B cell (primary cell): ENCODE measurements at regions of chr6 and their contacts with region 1.

Region 1: DNA sequence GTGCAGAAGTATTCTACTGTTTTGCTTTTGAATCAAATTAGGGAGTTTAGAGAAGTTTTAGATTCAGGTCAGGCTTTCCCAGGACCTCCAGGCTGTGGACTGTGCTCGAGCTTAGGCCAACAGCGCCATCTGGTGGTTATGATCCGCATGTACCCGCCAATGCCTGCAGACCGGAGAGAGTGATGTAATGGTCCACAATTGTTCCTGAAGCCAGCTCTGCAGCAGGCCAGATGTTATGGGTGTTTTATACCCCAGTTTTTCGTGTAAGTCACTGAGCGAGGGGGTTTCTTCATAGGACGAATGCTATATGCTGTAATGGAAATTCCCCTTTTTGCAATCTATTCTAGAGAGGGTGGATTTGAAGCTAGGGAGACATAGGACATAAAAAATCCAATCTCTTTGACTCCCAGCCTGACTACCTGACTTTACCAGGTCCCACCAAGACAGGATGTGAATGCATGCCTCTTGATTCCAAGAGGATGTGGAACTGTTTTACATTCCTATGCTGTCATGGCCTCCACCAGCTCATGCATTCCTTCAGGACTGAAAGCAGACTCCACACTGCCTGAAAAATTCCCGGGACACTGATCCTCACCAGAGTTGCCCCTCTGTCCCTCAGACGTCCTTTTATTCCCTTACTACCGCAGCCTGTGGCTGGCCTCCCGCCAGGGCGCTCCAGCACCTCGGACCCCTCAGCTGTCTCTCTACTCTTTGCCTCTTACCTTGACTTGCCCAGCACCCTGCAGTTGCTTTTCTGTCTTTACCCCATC is 41.2 kb upstream of the LY86 start:
- DNase-seq: peak; percentile 89
- ATAC-seq: peak; percentile 86
- H3K4me3 ChIP-seq: peak overlapping the region; percentile 36 to 66 (median 50)
- H3K4me3 Mint-ChIP-seq: peak overlapping the region; percentile 90
- H3K27ac ChIP-seq: no peak overlapping the region
- H3K27ac Mint-ChIP-seq: no peak overlapping the region
- H3K4me1 ChIP-seq: peaks cover 14 to 15% of the 10 kb centered on the region in 2 donors
- H3K4me1 Mint-ChIP-seq: peaks cover 13% of the 10 kb centered on the region
- H3K27me3 ChIP-seq: peaks cover 0 to 34% (median 9%) of the 10 kb centered on the region in 4 experiments
- H3K27me3 Mint-ChIP-seq: peaks cover 33% of the 10 kb centered on the region
- CTCF ChIP-seq: peak; percentile 98

Region 2: GRCh38 chr6:5422321-5422915 is 1124.9 kb before region 1 on chr6:
- CTCF ChIA-PET with region 1: interaction called, 14 read pairs
- POLR2A ChIA-PET with region 1: no interaction called
- intact Hi-C with region 1: no loop called
- DNase-seq: peak; percentile 10
- ATAC-seq: no peak
- H3K4me3 ChIP-seq: no peak overlapping the region
- H3K4me3 Mint-ChIP-seq: no peak overlapping the region
- H3K27ac ChIP-seq: no peak overlapping the region
- H3K27ac Mint-ChIP-seq: no peak overlapping the region
- H3K4me1 ChIP-seq: no peaks in the 10 kb centered on the region
- H3K4me1 Mint-ChIP-seq: peaks cover 7% of the 10 kb centered on the region
- H3K27me3 ChIP-seq: no peaks in the 10 kb centered on the region
- H3K27me3 Mint-ChIP-seq: no peaks in the 10 kb centered on the region
- CTCF ChIP-seq: peak; percentile 14

Region 3: GRCh38 chr6:6105472-6106036 is 441.7 kb before region 1 on chr6:
- CTCF ChIA-PET with region 1: interaction called, 36 read pairs
- POLR2A ChIA-PET with region 1: no interaction called
- intact Hi-C with region 1: loop called (anchors 1 kb)
- DNase-seq: peak; percentile 25
- ATAC-seq: no peak
- H3K4me3 ChIP-seq: no peak overlapping the region
- H3K4me3 Mint-ChIP-seq: no peak overlapping the region
- H3K27ac ChIP-seq: no peak overlapping the region
- H3K27ac Mint-ChIP-seq: no peak overlapping the region
- H3K4me1 ChIP-seq: no peaks in the 10 kb centered on the region
- H3K4me1 Mint-ChIP-seq: no peaks in the 10 kb centered on the region
- H3K27me3 ChIP-seq: peaks cover 0 to 7% (median 0%) of the 10 kb centered on the region in 4 experiments
- H3K27me3 Mint-ChIP-seq: peaks cover 44% of the 10 kb centered on the region
- CTCF ChIP-seq: no peak

Region 4: DNA sequence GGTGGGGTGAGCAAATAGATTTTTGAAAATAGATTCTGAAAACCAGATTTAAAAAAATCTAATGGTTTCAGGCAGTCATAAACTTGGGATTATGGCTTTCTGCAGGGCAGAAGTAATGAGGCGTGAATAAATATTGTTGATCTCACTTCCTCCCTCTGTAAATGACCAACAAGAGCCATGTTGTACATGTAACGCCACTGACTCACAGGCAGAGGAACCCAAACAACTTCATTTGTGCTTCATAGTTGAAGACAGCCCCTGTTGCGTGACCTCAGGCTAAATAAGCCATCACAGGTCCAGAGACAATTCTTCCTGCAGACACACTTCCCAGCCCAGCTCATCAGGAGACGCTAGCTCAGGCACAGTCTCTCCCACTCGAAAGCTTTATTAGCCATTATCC is 167.7 kb before region 1 on chr6:
- CTCF ChIA-PET with region 1: interaction called, 13 read pairs
- POLR2A ChIA-PET with region 1: no interaction called
- intact Hi-C with region 1: loop called (anchors 1 kb)
- DNase-seq: no peak
- ATAC-seq: peak; percentile 41
- H3K4me3 ChIP-seq: no peak overlapping the region
- H3K4me3 Mint-ChIP-seq: no peak overlapping the region
- H3K27ac ChIP-seq: no peak overlapping the region
- H3K27ac Mint-ChIP-seq: peak overlapping the region; percentile 29
- H3K4me1 ChIP-seq: no peaks in the 10 kb centered on the region
- H3K4me1 Mint-ChIP-seq: peaks cover 9% of the 10 kb centered on the region
- H3K27me3 ChIP-seq: no peaks in the 10 kb centered on the region
- H3K27me3 Mint-ChIP-seq: no peaks in the 10 kb centered on the region
- CTCF ChIP-seq: no peak

Region 5: DNA sequence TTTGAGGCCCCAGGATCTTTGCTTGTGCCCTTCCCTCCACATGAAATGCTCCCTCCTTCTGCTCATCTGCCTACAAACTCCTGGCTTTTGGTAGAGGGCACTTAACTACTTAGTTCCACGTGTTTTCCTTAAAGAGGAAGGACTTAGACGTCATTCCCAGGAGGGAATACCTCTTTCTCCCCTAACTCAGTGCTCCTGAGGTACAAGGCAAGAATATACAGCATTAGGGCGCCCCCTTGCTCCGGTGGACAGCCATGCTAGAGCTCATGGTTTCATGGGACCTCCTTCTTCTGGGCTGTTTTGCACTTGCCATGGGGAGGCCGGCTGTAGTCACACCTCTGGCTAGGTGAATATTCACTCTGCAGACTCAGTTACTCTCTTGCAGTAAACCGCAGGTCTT is 52.6 kb before region 1 on chr6:
- CTCF ChIA-PET with region 1: interaction called, 16 read pairs
- POLR2A ChIA-PET with region 1: no interaction called
- intact Hi-C with region 1: loop called (anchors 2 kb)
- DNase-seq: peak; percentile 59
- ATAC-seq: peak; percentile 61
- H3K4me3 ChIP-seq: no peak overlapping the region
- H3K4me3 Mint-ChIP-seq: no peak overlapping the region
- H3K27ac ChIP-seq: no peak overlapping the region
- H3K27ac Mint-ChIP-seq: no peak overlapping the region
- H3K4me1 ChIP-seq: no peaks in the 10 kb centered on the region
- H3K4me1 Mint-ChIP-seq: peaks cover 3% of the 10 kb centered on the region
- H3K27me3 ChIP-seq: no peaks in the 10 kb centered on the region
- H3K27me3 Mint-ChIP-seq: peaks cover 3% of the 10 kb centered on the region
- CTCF ChIP-seq: peak; percentile 68